ENCODE measurements at regions of chr13 and their contacts with region 1.

Region 1: DNA sequence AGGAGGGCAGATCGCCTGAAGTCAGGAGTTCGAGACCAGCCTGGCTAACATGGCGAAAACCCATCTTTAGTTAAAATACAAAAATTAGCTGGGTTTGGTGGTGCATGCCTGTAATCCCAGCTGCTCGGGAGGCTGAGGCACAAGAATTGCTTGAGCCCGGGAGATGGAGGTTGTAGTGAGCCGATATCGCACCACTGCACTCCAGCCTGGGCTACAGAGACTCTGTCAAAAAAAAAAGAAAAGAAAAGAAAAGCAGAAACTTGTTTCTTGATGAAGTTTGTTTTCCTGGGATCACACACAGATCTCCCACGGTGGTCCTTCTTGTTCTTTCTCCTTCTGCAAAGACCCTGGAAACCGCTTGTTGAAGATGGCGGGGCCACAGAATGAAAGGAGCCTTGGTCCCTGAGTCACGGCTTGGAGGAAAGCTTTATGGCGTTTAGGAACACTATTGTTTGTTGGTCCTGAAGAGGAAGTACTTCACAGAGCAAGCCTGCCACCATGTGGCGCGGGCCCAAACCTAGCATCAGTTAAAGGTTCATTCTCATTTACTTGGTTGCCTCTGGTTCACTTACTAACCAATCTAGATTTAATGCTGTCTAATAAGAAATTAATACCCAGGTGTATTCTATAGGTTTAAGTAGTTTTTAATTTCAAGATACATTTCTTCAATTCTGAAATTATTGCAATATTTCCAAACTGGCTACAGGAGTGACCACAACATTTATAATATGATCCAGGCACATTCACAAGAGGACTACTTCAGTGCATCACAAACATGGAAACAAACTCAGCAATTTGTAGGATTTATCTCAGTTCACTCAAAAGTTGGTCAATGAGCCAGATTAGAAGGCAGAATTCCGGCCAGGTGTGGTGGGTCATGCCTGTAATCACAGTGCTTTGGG is 21.3 kb upstream of the ARL11 start:
- DNase-seq: peak; percentile 89
- H3K4me3 ChIP-seq: peak overlapping the region in 2 of 3 experiments; percentile 5 to 27
- H3K27ac ChIP-seq: peak overlapping the region; percentile 28
- H3K4me1 ChIP-seq: no peaks in the 10 kb centered on the region
- H3K27me3 ChIP-seq: no peaks in the 10 kb centered on the region
- CTCF ChIP-seq: peak; percentile 80 to 83
- POLR2A ChIP-seq: no peak

Region 2: GRCh38 chr13:49240017-49240416 is 367.0 kb before region 1 on chr13:
- CTCF ChIA-PET with region 1: interaction called, 11 read pairs
- POLR2A ChIA-PET with region 1: no interaction called
- dilution Hi-C with region 1: no loop called
- intact Hi-C with region 1: loop called (anchors 2 kb)
- DNase-seq: peak; percentile 41
- H3K4me3 ChIP-seq: no peak overlapping the region
- H3K27ac ChIP-seq: no peak overlapping the region
- H3K4me1 ChIP-seq: no peaks in the 10 kb centered on the region
- H3K27me3 ChIP-seq: peaks cover 0 to 3% of the 10 kb centered on the region in 2 experiments
- CTCF ChIP-seq: peak; percentile 48 to 51
- POLR2A ChIP-seq: no peak

Region 3: DNA sequence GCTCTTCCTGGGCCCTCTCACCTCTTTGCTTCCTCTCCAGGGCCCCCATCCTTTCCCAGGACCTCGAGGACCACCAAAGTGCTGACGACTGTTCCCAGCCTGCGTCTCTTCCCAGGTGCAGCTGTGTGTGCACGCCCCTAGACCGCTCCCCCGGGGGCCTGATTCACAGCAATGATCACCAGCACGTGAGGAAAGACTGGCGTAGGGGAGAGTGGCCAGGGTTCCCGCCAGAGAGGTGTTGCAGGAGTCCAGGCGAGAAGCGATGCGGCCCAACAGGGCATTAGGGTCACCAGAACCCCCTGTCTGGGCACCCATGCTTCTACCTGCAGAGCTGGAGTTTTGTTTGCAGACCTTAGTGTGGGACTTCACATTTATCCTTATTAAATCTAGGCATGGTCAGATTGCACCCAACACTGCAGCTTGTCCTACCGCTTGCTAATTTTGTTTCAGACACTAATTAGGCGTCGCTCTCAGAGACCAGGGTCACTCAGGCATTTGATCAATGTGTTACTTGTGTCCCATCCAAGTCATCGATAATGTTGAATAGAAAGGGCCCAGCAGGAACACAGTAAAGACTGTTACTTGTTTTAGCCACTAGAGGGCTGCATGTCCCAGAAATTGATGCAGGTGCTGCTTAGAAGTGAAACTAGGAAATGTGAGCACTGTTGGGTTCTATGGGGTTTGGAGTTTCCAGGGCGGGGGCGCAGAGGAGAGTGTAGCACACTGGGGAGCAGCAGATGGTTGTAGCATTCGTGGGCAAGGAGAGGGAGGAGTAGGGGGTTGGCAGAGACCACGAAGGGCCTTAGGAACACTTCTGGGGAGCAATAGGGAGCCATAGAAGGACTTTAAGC is 306.0 kb before region 1 on chr13:
- CTCF ChIA-PET with region 1: interaction called, 60 read pairs
- POLR2A ChIA-PET with region 1: no interaction called
- dilution Hi-C with region 1: no loop called
- intact Hi-C with region 1: loop called (anchors 1 kb)
- DNase-seq: peak; percentile 70
- H3K4me3 ChIP-seq: peak overlapping the region in 1 of 3 experiments; percentile 11
- H3K27ac ChIP-seq: no peak overlapping the region
- H3K4me1 ChIP-seq: peaks cover 7% of the 10 kb centered on the region
- H3K27me3 ChIP-seq: no peaks in the 10 kb centered on the region
- CTCF ChIP-seq: peak; percentile 76 to 87
- POLR2A ChIP-seq: no peak

Region 4: GRCh38 chr13:49436890-49437289 is 170.1 kb before region 1 on chr13:
- CTCF ChIA-PET with region 1: interaction called, 10 read pairs
- POLR2A ChIA-PET with region 1: no interaction called
- dilution Hi-C with region 1: no loop called
- intact Hi-C with region 1: no loop called
- DNase-seq: no peak
- H3K4me3 ChIP-seq: no peak overlapping the region
- H3K27ac ChIP-seq: no peak overlapping the region
- H3K4me1 ChIP-seq: peaks cover 4% of the 10 kb centered on the region
- H3K27me3 ChIP-seq: no peaks in the 10 kb centered on the region
- CTCF ChIP-seq: no peak
- POLR2A ChIP-seq: no peak

Region 5: DNA sequence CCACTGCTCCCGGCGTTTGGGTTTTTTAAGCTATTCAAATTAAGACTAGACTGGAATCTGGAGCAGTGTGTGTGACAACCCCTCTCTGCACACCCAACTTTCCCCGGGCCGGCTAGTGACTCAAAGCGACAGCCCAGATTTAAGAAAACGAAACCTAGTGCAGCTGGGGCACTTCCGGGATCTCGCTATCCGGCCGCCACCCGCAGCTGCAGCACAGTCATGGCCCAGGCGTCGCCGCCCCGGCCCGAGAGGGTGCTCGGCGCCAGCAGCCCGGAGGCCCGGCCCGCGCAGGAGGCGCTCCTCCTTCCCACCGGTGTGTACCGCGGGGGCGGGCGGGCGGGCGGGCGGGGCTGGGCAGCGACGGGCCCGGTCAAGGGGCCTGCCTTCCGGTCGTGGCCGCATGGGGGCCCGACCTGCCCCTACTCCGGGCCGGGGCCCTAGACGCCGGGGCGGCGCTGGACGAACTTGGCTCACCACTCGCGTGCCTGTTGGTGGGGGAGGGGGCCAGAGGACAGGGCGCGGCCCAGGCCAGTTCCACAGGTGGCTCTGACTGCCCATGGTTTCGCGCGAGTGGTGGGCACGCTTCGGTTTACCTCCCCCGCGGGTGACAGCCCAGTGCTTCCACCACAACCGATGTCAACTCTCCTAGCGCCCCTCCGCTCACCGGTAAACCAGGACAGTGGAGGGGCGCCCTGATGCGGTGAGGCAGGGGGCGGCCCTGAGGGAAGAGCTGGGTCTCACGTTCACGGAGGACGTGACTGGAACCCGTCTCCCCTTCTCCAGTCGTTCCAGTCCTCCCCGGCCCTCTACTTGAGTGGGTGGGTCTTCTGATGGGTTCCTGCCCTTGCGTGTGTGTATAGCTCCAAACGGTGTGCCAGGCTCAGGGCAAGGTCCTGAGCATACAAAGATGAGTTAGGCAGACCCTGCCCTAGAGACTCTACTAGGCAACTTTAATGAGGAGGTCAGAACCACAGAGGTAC is 110.9 kb before region 1 on chr13 and contains the start of gene PHF11:
- CTCF ChIA-PET with region 1: interaction called, 4 read pairs
- POLR2A ChIA-PET with region 1: no interaction called
- dilution Hi-C with region 1: no loop called
- intact Hi-C with region 1: loop called (anchors 2 kb)
- DNase-seq: peak; percentile 58
- H3K4me3 ChIP-seq: peak within 1 kb of the TSS; percentile 42 to 76 (median 58)
- H3K27ac ChIP-seq: peak within 1 kb of the TSS; percentile 73
- H3K4me1 ChIP-seq: peaks cover 11% of the 10 kb centered on the region
- H3K27me3 ChIP-seq: no peaks in the 10 kb centered on the region
- CTCF ChIP-seq: peak in 1 of 2 donors; percentile 5
- POLR2A ChIP-seq: peak; percentile 59
- total RNA-seq, gene PHF11: 28.2 and 32.4 TPM in 2 replicates

Region 6: GRCh38 chr13:49627831-49628652 is 21.0 kb after region 1 on chr13 and contains the start of gene ARL11:
- CTCF ChIA-PET with region 1: interaction called, 18 read pairs
- POLR2A ChIA-PET with region 1: no interaction called
- dilution Hi-C with region 1: no loop called
- intact Hi-C with region 1: no loop called
- DNase-seq: no peak
- H3K4me3 ChIP-seq: no peak within 1 kb of the TSS
- H3K27ac ChIP-seq: peak within 1 kb of the TSS; percentile 62
- H3K4me1 ChIP-seq: peaks cover 27% of the 10 kb centered on the region
- H3K27me3 ChIP-seq: peaks cover 0 to 4% of the 10 kb centered on the region in 2 experiments
- CTCF ChIP-seq: no peak
- POLR2A ChIP-seq: no peak
- total RNA-seq, gene ARL11: 0.20 and 0.23 TPM in 2 replicates

Measured in endothelial cell of umbilical vein (primary cell).